H1 (cell line): ENCODE measurements at regions of chr3 and their contacts with region 1.

Region 1: DNA sequence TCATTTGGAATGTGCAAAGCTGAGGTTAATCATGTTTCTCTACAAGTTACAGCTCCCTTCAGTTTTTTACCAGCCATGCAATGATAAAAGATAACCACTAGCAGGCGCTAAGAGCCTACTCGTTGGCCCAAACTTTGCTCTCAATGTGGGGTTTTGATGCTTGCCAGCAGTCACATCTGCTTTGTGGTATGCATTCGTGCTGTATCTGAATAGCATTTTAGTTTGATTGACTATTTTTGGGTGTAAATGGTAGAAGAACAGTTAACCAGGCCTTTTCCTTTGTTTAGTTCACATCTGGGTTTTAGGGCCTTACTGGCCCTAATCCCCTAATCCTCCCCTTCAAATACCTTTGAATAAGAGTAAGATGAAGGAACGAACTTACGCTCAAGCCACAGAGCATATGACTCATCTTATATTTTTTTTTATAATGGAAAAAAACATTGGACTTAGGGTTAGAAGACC is 4.4 kb upstream of the CLDN11 start:
- DNase-seq: no peak
- H3K4me3 ChIP-seq: no peak overlapping the region
- H3K27ac ChIP-seq: no peak overlapping the region
- H3K4me1 ChIP-seq: peaks cover 0 to 5% (median 4%) of the 10 kb centered on the region in 4 experiments; a peak in 6 of 7 replicates
- H3K27me3 ChIP-seq: peaks cover 5 to 18% (median 16%) of the 10 kb centered on the region in 4 experiments
- CTCF ChIP-seq: peak; percentile 39 to 95 (median 94)
- EP300 ChIP-seq: no peak
- POLR2A ChIP-seq: no peak
- RAD21 ChIP-seq: peak; percentile 98 to 99

Region 2: GRCh38 chr3:170397579-170398177 is 16.6 kb before region 1 on chr3:
- CTCF ChIA-PET with region 1: interaction called, 41 read pairs
- POLR2A ChIA-PET with region 1: interaction called, 3 read pairs
- DNase-seq: no peak
- H3K4me3 ChIP-seq: no peak overlapping the region
- H3K27ac ChIP-seq: no peak overlapping the region
- H3K4me1 ChIP-seq: no peaks in the 10 kb centered on the region
- H3K27me3 ChIP-seq: no peaks in the 10 kb centered on the region
- CTCF ChIP-seq: no peak
- EP300 ChIP-seq: no peak
- POLR2A ChIP-seq: no peak
- RAD21 ChIP-seq: no peak

Region 3: GRCh38 chr3:170440346-170440745 is 26.1 kb after region 1 on chr3:
- CTCF ChIA-PET with region 1: interaction called, 20 read pairs
- POLR2A ChIA-PET with region 1: no interaction called
- DNase-seq: no peak
- H3K4me3 ChIP-seq: no peak overlapping the region
- H3K27ac ChIP-seq: no peak overlapping the region
- H3K4me1 ChIP-seq: no peaks in the 10 kb centered on the region; a peak in 1 of 7 replicates
- H3K27me3 ChIP-seq: no peaks in the 10 kb centered on the region
- CTCF ChIP-seq: no peak
- EP300 ChIP-seq: no peak
- POLR2A ChIP-seq: no peak
- RAD21 ChIP-seq: no peak

Region 4: GRCh38 chr3:170499565-170500156 is 85.4 kb after region 1 on chr3:
- CTCF ChIA-PET with region 1: interaction called, 156 read pairs
- POLR2A ChIA-PET with region 1: no interaction called
- DNase-seq: no peak
- H3K4me3 ChIP-seq: no peak overlapping the region
- H3K27ac ChIP-seq: no peak overlapping the region
- H3K4me1 ChIP-seq: no peaks in the 10 kb centered on the region
- H3K27me3 ChIP-seq: no peaks in the 10 kb centered on the region
- CTCF ChIP-seq: peak; percentile 72 to 83 (median 76)
- EP300 ChIP-seq: no peak
- POLR2A ChIP-seq: no peak
- RAD21 ChIP-seq: peak; percentile 77 to 81

Region 5: DNA sequence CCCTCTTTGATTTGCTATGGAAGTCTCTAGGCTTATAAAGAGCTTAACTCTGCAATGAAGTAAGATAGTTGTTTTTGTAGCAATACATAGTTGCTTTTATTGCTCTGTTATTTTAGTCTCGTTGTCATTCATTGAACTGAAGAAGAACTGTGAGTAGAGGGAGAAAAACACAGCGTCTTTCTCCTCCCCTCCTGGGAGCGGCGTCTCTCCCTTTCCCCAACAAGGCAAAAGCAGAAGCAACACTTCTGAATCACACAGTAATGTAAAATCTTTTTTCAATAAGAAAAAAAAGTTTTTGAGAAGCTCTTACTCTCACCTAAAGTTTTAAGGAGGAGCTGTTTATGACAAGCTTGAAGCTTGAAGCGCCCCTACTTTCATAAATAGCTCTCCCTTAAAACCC is 290.9 kb after region 1 on chr3:
- CTCF ChIA-PET with region 1: no interaction called
- POLR2A ChIA-PET with region 1: no interaction called
- DNase-seq: no peak
- H3K4me3 ChIP-seq: no peak overlapping the region
- H3K27ac ChIP-seq: no peak overlapping the region
- H3K4me1 ChIP-seq: no peaks in the 10 kb centered on the region
- H3K27me3 ChIP-seq: no peaks in the 10 kb centered on the region
- CTCF ChIP-seq: no peak
- EP300 ChIP-seq: no peak
- POLR2A ChIP-seq: no peak
- RAD21 ChIP-seq: no peak

Region 6: DNA sequence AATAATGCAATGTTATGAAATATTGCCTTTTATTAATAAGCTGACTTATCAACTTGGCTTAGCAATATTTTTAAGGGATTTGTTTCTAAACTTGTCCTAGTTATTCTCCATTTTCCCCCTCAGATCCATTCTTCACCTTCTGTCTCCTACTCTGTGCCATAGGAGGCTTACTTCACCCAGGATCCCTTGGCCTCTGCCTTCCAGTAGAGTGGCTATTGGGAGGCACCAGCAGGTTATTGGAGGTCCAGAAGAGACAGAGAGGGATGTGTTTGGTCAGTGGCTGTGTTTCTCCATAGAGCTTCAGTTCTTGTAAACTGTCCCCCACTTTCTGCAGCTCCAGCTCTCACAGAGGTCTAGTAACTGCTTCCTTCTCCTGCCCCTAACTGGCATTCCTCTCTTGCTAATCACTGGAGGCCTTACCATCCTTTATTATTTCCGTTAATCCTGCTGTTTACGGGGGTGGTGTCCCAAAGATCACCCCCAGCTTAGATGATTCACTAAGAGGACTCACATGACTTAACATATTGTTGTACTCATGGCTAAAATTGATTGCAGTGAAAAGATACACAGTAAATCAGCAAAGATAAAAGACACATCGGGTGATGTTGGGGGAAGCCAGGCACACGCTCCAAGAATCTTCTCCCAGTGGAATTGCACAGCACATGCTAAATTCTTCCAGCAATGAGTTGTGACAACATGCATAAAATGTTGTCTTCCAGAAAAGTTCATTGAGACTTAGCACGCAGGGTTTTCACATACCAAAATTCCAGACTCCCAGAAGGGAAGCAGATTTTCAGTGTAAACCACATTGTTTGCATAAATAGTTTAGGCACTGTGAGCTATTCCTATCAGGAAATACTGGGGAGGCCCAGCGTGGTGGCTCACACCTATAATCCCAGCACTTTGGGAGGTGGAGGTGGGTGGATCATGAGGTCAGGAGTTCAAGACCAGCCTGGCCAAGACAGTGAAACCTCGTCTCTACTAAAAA is 388.2 kb after region 1 on chr3:
- CTCF ChIA-PET with region 1: interaction called, 11 read pairs
- POLR2A ChIA-PET with region 1: no interaction called
- DNase-seq: no peak
- H3K4me3 ChIP-seq: no peak overlapping the region
- H3K27ac ChIP-seq: no peak overlapping the region
- H3K4me1 ChIP-seq: peaks cover 0 to 4% (median 1%) of the 10 kb centered on the region in 4 experiments; a peak in 3 of 7 replicates
- H3K27me3 ChIP-seq: no peaks in the 10 kb centered on the region
- CTCF ChIP-seq: no peak
- EP300 ChIP-seq: no peak
- POLR2A ChIP-seq: no peak
- RAD21 ChIP-seq: no peak

Region 7: GRCh38 chr3:170889132-170889531 is 474.9 kb after region 1 on chr3:
- CTCF ChIA-PET with region 1: no interaction called
- POLR2A ChIA-PET with region 1: no interaction called
- DNase-seq: no peak
- H3K4me3 ChIP-seq: no peak overlapping the region
- H3K27ac ChIP-seq: no peak overlapping the region
- H3K4me1 ChIP-seq: no peaks in the 10 kb centered on the region
- H3K27me3 ChIP-seq: no peaks in the 10 kb centered on the region
- CTCF ChIP-seq: no peak
- EP300 ChIP-seq: no peak
- POLR2A ChIP-seq: no peak
- RAD21 ChIP-seq: no peak